GM12878 (cell line): ENCODE measurements at regions of chr14 and their contacts with region 1.

Region 1: GRCh38 chr14:71403656-71404055 is 496.4 kb downstream of the PCNX1 start:
- DNase-seq: peak; percentile 42
- ATAC-seq: peak; percentile 71
- H3K4me3 ChIP-seq: no peak overlapping the region
- H3K27ac ChIP-seq: no peak overlapping the region
- H3K4me1 ChIP-seq: peaks cover 26% of the 10 kb centered on the region
- H3K27me3 ChIP-seq: no peaks in the 10 kb centered on the region
- CTCF ChIP-seq: peak; percentile 7 to 22 (median 10); a peak in 2 of 6 replicates
- EP300 ChIP-seq: no peak
- POLR2A ChIP-seq: no peak
- RAD21 ChIP-seq: peak; percentile 54

Region 2: GRCh38 chr14:71011479-71011878 is 392.2 kb before region 1 on chr14:
- CTCF ChIA-PET with region 1: no interaction called
- POLR2A ChIA-PET with region 1: no interaction called
- RAD21 ChIA-PET with region 1: no interaction called
- SMC1A ChIA-PET with region 1: no interaction called
- in situ Hi-C with region 1: no loop called
- intact Hi-C with region 1: no loop called
- DNase-seq: no peak
- ATAC-seq: no peak
- H3K4me3 ChIP-seq: no peak overlapping the region
- H3K27ac ChIP-seq: no peak overlapping the region
- H3K4me1 ChIP-seq: no peaks in the 10 kb centered on the region
- H3K27me3 ChIP-seq: no peaks in the 10 kb centered on the region
- CTCF ChIP-seq: no peak; a peak in 1 of 6 replicates
- EP300 ChIP-seq: no peak
- POLR2A ChIP-seq: no peak
- RAD21 ChIP-seq: no peak

Region 3: GRCh38 chr14:71193663-71194062 is 210.0 kb before region 1 on chr14:
- CTCF ChIA-PET with region 1: no interaction called
- POLR2A ChIA-PET with region 1: no interaction called
- RAD21 ChIA-PET with region 1: no interaction called
- SMC1A ChIA-PET with region 1: no interaction called
- in situ Hi-C with region 1: no loop called
- intact Hi-C with region 1: no loop called
- DNase-seq: no peak
- ATAC-seq: no peak
- H3K4me3 ChIP-seq: no peak overlapping the region
- H3K27ac ChIP-seq: no peak overlapping the region
- H3K4me1 ChIP-seq: no peaks in the 10 kb centered on the region
- H3K27me3 ChIP-seq: no peaks in the 10 kb centered on the region; a peak in 1 of 4 replicates
- CTCF ChIP-seq: no peak
- EP300 ChIP-seq: no peak
- POLR2A ChIP-seq: no peak
- RAD21 ChIP-seq: no peak

Region 4: DNA sequence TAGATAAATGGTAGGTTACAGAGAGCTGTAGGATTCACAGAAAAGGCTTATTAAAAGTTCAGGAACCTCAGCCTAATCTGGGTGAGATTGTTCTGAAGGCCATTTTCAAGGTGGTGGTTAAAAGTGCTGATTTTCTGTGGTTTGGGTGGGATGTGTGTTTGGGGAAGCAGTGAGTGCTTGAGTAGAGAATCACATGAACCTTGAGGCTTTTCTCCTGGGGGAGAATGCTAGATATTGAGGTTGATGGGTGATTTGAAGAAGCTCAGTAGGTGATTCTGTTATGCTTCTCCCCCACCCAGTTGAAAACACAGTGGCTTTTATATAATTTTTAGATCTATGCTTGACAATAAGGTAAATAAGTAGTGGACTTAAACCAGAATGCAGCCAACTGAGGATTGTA is 75.5 kb before region 1 on chr14:
- CTCF ChIA-PET with region 1: interaction called, 89 read pairs
- POLR2A ChIA-PET with region 1: interaction called, 10 read pairs
- RAD21 ChIA-PET with region 1: interaction called, 68 read pairs
- SMC1A ChIA-PET with region 1: interaction called, 57 read pairs
- in situ Hi-C with region 1: no loop called
- intact Hi-C with region 1: loop called (anchors 1 kb)
- DNase-seq: peak; percentile 66
- ATAC-seq: peak; percentile 33
- H3K4me3 ChIP-seq: peak overlapping the region; percentile 18; the same call in 1 of the 2 replicates
- H3K27ac ChIP-seq: peak overlapping the region; percentile 58
- H3K4me1 ChIP-seq: peaks cover 60% of the 10 kb centered on the region
- H3K27me3 ChIP-seq: no peaks in the 10 kb centered on the region
- CTCF ChIP-seq: no peak
- EP300 ChIP-seq: peak; percentile 59 to 67; a peak in 1 of 4 replicates
- POLR2A ChIP-seq: no peak
- RAD21 ChIP-seq: no peak

Region 5: GRCh38 chr14:71362920-71363584 is 40.6 kb before region 1 on chr14:
- CTCF ChIA-PET with region 1: interaction called, 5 read pairs
- POLR2A ChIA-PET with region 1: interaction called, 4 read pairs
- RAD21 ChIA-PET with region 1: interaction called, 18 read pairs
- SMC1A ChIA-PET with region 1: interaction called, 24 read pairs
- in situ Hi-C with region 1: no loop called
- intact Hi-C with region 1: loop called (anchors 5 kb)
- DNase-seq: peak; percentile 53
- ATAC-seq: peak; percentile 73
- H3K4me3 ChIP-seq: no peak overlapping the region
- H3K27ac ChIP-seq: peak overlapping the region; percentile 47; the same call in 1 of the 2 replicates
- H3K4me1 ChIP-seq: peaks cover 49% of the 10 kb centered on the region
- H3K27me3 ChIP-seq: no peaks in the 10 kb centered on the region
- CTCF ChIP-seq: no peak
- EP300 ChIP-seq: peak; percentile 33 to 51; a peak in 1 of 4 replicates
- POLR2A ChIP-seq: no peak
- RAD21 ChIP-seq: no peak

Region 6: GRCh38 chr14:71430321-71431208 is 26.9 kb after region 1 on chr14:
- CTCF ChIA-PET with region 1: interaction called, 10 read pairs
- POLR2A ChIA-PET with region 1: interaction called, 13 read pairs
- RAD21 ChIA-PET with region 1: interaction called, 29 read pairs
- SMC1A ChIA-PET with region 1: interaction called, 54 read pairs
- in situ Hi-C with region 1: no loop called
- intact Hi-C with region 1: no loop called
- DNase-seq: peak; percentile 73
- ATAC-seq: peak; percentile 82
- H3K4me3 ChIP-seq: peak overlapping the region; percentile 58; the same call in 1 of the 2 replicates
- H3K27ac ChIP-seq: peak overlapping the region; percentile 84
- H3K4me1 ChIP-seq: peaks cover 33% of the 10 kb centered on the region
- H3K27me3 ChIP-seq: no peaks in the 10 kb centered on the region
- CTCF ChIP-seq: no peak
- EP300 ChIP-seq: peak; percentile 47 to 60; a peak in 3 of 4 replicates
- POLR2A ChIP-seq: no peak
- RAD21 ChIP-seq: 0 out of 2 replicates have a peak, but pooled peaks have one; percentile 6

Region 7: GRCh38 chr14:71472043-71472960 is 68.6 kb after region 1 on chr14:
- CTCF ChIA-PET with region 1: no interaction called
- POLR2A ChIA-PET with region 1: interaction called, 4 read pairs
- RAD21 ChIA-PET with region 1: interaction called, 10 read pairs
- SMC1A ChIA-PET with region 1: interaction called, 7 read pairs
- in situ Hi-C with region 1: no loop called
- intact Hi-C with region 1: no loop called
- DNase-seq: no peak
- ATAC-seq: peak; percentile 84
- H3K4me3 ChIP-seq: no peak overlapping the region
- H3K27ac ChIP-seq: peak overlapping the region; percentile 69
- H3K4me1 ChIP-seq: peaks cover 35% of the 10 kb centered on the region
- H3K27me3 ChIP-seq: no peaks in the 10 kb centered on the region
- CTCF ChIP-seq: no peak
- EP300 ChIP-seq: 0 out of 4 replicates have a peak, but pooled peaks of 1 of the 2 experiments have one; percentile 1
- POLR2A ChIP-seq: no peak
- RAD21 ChIP-seq: no peak

Region 8: DNA sequence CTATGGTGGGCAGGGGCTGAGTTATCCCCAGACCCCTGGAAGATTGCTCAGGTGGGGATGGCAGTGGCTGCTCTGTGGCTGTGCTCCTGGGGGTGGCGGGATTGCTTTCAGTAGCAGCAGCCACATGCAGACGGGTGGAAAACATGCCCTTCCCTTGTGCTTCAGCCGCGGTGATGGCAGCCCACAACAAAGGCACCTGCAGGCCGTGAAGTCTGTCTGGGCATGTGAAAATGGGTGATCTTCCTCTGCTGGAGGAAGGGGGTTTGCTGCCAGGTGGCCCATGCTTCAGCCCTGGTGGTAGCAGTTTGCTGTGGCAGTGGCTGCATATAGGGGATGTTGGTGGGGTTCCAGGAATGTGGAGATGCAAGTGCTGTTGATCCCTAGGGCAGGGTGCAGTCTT is 202.4 kb after region 1 on chr14:
- CTCF ChIA-PET with region 1: no interaction called
- POLR2A ChIA-PET with region 1: no interaction called
- RAD21 ChIA-PET with region 1: no interaction called
- SMC1A ChIA-PET with region 1: no interaction called
- in situ Hi-C with region 1: no loop called
- intact Hi-C with region 1: no loop called
- DNase-seq: no peak
- ATAC-seq: peak; percentile 14
- H3K4me3 ChIP-seq: no peak overlapping the region
- H3K27ac ChIP-seq: peak overlapping the region; percentile 77
- H3K4me1 ChIP-seq: peaks cover 23% of the 10 kb centered on the region
- H3K27me3 ChIP-seq: no peaks in the 10 kb centered on the region
- CTCF ChIP-seq: no peak
- EP300 ChIP-seq: no peak
- POLR2A ChIP-seq: no peak
- RAD21 ChIP-seq: no peak

Region 9: DNA sequence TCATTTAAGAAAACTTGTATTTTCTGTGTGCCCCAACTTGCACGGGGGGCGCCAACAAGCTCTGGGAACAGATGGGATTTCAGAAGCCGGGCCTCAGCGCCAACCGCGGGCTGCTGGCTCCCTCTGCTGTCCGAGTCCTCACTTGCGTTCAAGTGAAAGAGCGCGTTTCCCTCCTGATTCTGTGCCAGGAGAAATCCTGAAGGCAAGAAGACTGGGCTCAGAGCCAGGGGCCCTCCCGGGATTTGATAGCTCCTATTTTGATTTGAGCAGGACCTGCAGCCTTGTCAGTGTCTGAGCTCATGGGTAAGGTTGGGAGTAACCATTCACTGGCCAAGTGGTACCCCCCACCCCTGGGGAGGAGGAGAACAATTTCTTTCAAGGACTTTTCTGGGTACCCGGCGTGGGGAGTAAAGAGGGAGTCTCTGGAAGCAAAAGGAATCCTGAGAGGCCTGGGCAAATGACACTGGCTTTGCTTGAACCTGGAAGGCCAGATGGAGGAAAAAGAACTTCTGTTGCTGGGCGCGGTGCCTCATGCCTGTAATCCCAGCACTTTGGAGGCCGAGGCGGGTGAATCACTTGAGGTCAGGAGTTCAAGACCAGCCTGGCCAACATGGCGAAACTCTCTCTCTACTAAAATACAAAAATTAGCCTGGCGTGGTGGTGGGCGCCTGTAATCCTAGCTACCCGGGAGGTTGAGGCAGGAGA is 349.6 kb after region 1 on chr14:
- CTCF ChIA-PET with region 1: interaction called, 4 read pairs
- POLR2A ChIA-PET with region 1: no interaction called
- RAD21 ChIA-PET with region 1: interaction called, 3 read pairs
- SMC1A ChIA-PET with region 1: interaction called, 7 read pairs
- in situ Hi-C with region 1: no loop called
- intact Hi-C with region 1: loop called (anchors 2 kb)
- DNase-seq: peak; percentile 27
- ATAC-seq: peak; percentile 85
- H3K4me3 ChIP-seq: no peak overlapping the region
- H3K27ac ChIP-seq: no peak overlapping the region
- H3K4me1 ChIP-seq: no peaks in the 10 kb centered on the region
- H3K27me3 ChIP-seq: no peaks in the 10 kb centered on the region
- CTCF ChIP-seq: peak; percentile 88 to 94 (median 91)
- EP300 ChIP-seq: no peak
- POLR2A ChIP-seq: no peak
- RAD21 ChIP-seq: peak; percentile 99

Region 10: GRCh38 chr14:71883094-71883766 is 479.6 kb after region 1 on chr14:
- CTCF ChIA-PET with region 1: no interaction called
- POLR2A ChIA-PET with region 1: no interaction called
- RAD21 ChIA-PET with region 1: no interaction called
- SMC1A ChIA-PET with region 1: no interaction called
- in situ Hi-C with region 1: no loop called
- intact Hi-C with region 1: no loop called
- DNase-seq: no peak
- ATAC-seq: peak; percentile 84
- H3K4me3 ChIP-seq: no peak overlapping the region
- H3K27ac ChIP-seq: no peak overlapping the region
- H3K4me1 ChIP-seq: no peaks in the 10 kb centered on the region
- H3K27me3 ChIP-seq: no peaks in the 10 kb centered on the region
- CTCF ChIP-seq: no peak
- EP300 ChIP-seq: no peak
- POLR2A ChIP-seq: no peak
- RAD21 ChIP-seq: no peak